PC-9 (cell line): ENCODE measurements at regions of chr6 and their contacts with region 1.

Region 1: GRCh38 chr6:130037207-130037811 is 18.9 kb downstream of the L3MBTL3 start:
- DNase-seq: no peak
- H3K4me3 ChIP-seq: no peak overlapping the region
- H3K27ac ChIP-seq: no peak overlapping the region
- H3K4me1 ChIP-seq: no peaks in the 10 kb centered on the region
- H3K27me3 ChIP-seq: no peaks in the 10 kb centered on the region
- CTCF ChIP-seq: peak; percentile 86

Region 2: GRCh38 chr6:129865013-129865412 is 172.3 kb before region 1 on chr6:
- CTCF ChIA-PET with region 1: no interaction called
- POLR2A ChIA-PET with region 1: no interaction called
- intact Hi-C with region 1: no loop called
- DNase-seq: no peak
- H3K4me3 ChIP-seq: no peak overlapping the region
- H3K27ac ChIP-seq: no peak overlapping the region
- H3K4me1 ChIP-seq: no peaks in the 10 kb centered on the region
- H3K27me3 ChIP-seq: no peaks in the 10 kb centered on the region
- CTCF ChIP-seq: no peak

Region 3: DNA sequence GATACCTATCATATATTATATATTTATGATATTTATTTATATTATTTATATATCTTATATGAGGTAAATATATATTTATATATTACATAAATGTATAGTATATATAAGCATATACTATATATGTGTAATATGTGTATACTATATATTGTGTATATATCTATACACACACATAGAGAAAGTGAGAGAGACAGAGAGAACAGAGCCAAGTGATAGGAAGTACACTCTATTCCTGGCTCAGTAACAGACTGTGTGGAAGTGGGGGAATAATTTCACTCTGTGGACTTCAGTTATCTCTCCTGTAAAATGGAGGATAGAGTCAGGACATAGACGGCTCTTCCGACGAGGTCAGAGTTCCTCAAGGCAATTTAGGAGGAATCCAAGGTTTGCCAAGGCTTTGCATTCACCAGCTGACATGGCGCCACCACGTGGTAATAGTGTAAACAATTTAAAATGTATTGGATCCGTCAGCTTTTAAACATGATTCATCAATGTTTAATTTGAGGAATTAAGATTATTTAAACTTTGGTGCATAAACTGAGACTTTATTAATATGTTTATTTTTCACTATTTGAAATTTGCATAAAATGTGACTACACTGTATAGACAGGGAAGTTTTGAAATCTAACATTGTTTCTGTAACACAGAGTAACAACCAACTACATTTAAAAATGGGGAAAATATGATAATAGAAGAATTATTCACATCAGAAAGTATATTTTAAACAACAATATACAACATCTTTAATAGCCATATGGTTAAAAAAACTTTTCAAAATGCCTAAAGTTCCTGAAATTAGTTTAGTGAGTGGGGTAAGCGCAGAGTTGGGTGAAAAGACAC is 100.8 kb before region 1 on chr6:
- CTCF ChIA-PET with region 1: no interaction called
- POLR2A ChIA-PET with region 1: no interaction called
- intact Hi-C with region 1: no loop called
- DNase-seq: peak; percentile 21 to 58
- H3K4me3 ChIP-seq: no peak overlapping the region; the same call in 1 of the 2 replicates
- H3K27ac ChIP-seq: no peak overlapping the region
- H3K4me1 ChIP-seq: no peaks in the 10 kb centered on the region
- H3K27me3 ChIP-seq: no peaks in the 10 kb centered on the region
- CTCF ChIP-seq: peak; percentile 69

Region 4: GRCh38 chr6:130697995-130698535 is 660.8 kb after region 1 on chr6:
- CTCF ChIA-PET with region 1: interaction called, 23 read pairs
- POLR2A ChIA-PET with region 1: no interaction called
- intact Hi-C with region 1: loop called (anchors 10 kb)
- DNase-seq: peak in 1 of 2 experiments; percentile 34
- H3K4me3 ChIP-seq: no peak overlapping the region
- H3K27ac ChIP-seq: no peak overlapping the region
- H3K4me1 ChIP-seq: no peaks in the 10 kb centered on the region
- H3K27me3 ChIP-seq: peaks cover 8% of the 10 kb centered on the region; the same call in 1 of the 2 replicates
- CTCF ChIP-seq: peak; percentile 91

Region 5: DNA sequence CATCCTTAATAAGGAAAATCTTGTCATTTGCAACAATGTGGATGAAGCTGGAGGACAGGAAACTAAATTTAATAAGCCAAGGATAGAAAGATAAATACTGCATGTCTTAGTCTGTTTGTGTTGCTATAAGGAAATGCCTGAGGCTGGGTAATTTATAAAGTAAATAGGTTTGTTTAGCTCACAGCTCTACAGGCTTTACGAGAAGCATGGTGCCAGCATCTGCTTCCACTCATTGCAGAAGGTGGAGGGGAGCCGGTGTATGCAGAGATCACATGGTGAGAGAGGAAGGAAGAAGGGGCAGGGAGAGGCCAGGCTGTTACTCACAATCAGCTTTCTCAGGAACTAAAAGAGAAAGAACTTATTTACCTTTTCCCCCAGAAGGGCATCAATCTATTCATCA is 671.0 kb after region 1 on chr6:
- CTCF ChIA-PET with region 1: interaction called, 12 read pairs
- POLR2A ChIA-PET with region 1: no interaction called
- intact Hi-C with region 1: no loop called
- DNase-seq: no peak
- H3K4me3 ChIP-seq: no peak overlapping the region
- H3K27ac ChIP-seq: no peak overlapping the region
- H3K4me1 ChIP-seq: peaks cover 4% of the 10 kb centered on the region; the same call in 1 of the 2 replicates
- H3K27me3 ChIP-seq: peaks cover 12% of the 10 kb centered on the region; the same call in 1 of the 2 replicates
- CTCF ChIP-seq: no peak